ENCODE measurements at regions of chr3 and their contacts with region 1.

Region 1: DNA sequence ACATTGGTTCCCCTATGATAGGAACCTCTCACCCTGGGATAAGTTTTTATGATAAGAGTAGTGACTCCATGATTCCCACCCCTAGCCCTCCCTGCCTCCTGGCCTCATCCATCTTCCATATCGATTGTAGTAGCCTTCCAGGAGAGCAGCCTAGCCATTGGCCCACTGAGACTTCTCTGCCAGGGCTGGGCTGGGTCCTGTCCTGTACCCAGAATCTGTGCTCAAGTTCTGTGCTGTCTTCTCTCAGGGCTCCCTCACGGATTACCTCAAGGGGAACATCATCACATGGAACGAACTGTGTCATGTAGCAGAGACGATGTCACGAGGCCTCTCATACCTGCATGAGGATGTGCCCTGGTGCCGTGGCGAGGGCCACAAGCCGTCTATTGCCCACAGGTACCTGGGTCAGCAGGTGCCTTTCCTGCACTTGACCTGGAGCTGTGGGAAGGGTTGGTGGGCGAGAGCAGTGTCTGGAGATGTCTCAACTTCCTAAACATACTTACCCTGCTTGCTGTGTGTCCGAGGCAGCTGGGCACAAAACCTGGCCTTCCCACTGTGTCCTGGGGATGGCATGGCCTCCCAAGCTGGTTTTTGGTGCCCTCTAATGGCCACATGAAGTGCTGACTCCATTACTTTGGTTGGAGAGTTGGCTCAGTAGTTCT is 16.6 kb upstream of the EXOG start:
- DNase-seq: peak; percentile 37
- H3K4me3 ChIP-seq: no peak overlapping the region
- H3K27ac ChIP-seq: no peak overlapping the region
- H3K27me3 ChIP-seq: no peaks in the 10 kb centered on the region
- CTCF ChIP-seq: peak; percentile 96

Region 2: DNA sequence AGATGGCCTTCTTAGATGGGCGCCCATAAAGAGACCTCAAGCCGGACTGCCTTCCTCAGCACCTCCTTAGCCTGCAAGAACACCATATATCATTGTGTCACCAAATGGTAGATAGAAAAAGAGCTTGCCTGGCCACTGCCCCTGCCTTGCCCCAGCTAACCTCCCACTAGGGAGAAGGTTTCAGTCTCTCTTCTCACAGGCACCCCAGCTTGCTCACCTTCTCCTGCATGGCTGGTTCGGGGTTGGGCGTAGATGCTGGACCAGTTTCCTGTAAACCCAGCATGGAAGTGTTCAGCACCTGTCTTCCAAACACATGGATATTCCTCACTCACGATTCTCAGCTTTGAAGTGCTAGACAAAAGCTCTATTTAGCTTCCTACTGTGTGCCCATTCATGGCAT is 200.7 kb before region 1 on chr3:
- CTCF ChIA-PET with region 1: interaction called, 10 read pairs
- POLR2A ChIA-PET with region 1: no interaction called
- DNase-seq: no peak
- H3K4me3 ChIP-seq: no peak overlapping the region
- H3K27ac ChIP-seq: no peak overlapping the region
- H3K27me3 ChIP-seq: no peaks in the 10 kb centered on the region
- CTCF ChIP-seq: no peak

Region 3: DNA sequence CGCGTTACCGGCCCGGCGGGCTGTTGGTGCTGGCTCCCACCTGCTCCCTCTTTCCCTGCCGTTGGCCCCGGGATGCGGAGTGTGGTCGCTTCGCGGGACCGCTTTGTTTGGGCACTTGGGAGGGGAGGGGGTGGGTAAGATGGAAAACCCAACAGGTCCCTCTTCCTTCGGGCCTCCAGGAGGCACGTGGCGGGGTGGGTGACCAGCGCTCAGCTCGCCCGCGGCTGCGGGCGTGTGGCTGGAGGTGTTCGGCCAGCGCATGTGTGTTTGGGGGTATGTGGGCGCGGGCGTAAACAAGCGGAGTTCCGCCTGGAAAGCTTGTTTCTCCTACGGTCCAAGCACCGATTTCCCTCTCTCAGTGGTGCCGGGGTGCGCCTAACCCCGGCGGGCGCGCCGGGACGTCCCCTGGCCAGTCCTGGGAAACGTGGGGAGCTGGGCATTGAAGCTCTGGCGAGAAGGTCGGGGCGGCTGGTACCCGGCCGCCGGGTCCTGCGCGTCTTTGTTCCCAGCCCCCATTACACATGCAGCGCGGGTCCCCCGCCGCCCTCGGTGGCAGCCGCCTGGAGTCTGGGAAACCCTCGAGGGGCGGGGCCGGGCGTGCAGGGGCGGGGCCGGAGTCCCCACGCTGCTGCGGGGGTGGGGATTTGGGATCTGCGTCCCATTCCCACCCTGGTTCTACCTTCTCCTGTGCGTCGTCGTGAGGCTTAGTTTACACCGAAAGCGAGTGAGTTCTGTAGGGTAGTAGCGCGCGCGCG is 24.5 kb before region 1 on chr3:
- CTCF ChIA-PET with region 1: interaction called, 22 read pairs
- POLR2A ChIA-PET with region 1: no interaction called
- DNase-seq: no peak
- H3K4me3 ChIP-seq: peak overlapping the region; percentile 70
- H3K27ac ChIP-seq: no peak overlapping the region
- H3K27me3 ChIP-seq: no peaks in the 10 kb centered on the region
- CTCF ChIP-seq: no peak

Region 4: DNA sequence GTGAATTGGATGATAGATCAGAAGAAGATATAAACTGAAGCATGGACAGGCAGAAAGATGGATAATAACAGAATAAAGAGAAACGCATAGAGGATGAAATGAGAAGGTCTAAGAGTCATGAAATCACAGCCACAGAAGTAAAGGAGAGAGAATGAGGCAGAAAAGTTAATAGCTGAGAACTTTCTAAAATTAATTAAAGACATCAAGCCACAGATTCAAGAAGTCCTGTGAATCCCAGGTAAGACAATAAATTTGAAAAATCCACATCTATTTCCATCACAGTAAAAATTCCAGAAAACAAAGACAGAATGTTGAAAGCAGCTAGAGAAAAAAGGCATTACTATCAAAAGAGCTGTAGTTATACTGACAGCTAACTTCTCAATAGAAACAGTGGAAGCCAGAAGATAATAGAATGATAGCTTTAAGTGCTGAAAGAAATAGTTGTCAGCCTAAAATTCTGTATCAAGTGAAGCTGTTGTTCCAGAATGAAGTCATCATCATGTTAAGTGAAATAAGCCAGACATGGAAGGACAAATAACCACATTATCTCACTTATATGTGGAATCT is 13.9 kb before region 1 on chr3:
- CTCF ChIA-PET with region 1: interaction called, 12 read pairs
- POLR2A ChIA-PET with region 1: no interaction called
- DNase-seq: no peak
- H3K4me3 ChIP-seq: no peak overlapping the region
- H3K27ac ChIP-seq: no peak overlapping the region
- H3K27me3 ChIP-seq: no peaks in the 10 kb centered on the region
- CTCF ChIP-seq: no peak

Region 5: DNA sequence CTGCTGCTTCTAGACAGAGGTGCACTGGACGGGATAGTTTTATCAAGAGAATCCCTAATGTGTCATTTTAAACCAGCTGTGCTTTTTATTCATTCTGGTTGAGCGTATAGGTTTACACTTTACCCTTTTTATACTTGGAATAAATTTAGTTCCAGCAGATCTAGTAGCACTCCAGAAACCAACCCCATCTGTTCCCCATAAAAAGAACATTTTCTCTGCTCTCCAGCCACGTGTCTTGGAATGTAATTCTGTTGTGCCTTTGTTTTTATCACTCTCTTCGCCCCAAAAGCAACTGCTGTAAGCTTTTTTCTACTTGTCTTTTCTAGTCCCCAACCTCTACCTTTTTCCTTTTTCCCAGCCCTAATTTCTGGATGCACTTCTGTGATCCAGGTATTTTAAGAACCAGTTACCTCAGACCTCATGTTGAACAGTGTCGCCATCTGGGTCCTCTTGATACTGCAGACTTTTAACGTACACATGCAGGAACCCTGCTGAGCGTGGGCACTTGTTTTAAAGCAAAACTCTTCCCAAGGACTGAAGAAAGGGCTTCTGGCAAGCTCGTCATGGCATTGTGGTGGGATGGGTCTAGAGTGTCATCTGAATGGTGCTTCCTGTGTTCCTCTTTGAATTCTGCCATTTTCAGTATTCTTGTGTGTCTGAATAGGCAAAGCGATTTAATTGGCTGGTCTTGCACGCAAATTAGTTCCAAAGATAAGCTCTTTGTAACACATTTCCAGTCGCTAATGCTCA is 10.9 kb after region 1 on chr3:
- CTCF ChIA-PET with region 1: interaction called, 35 read pairs
- POLR2A ChIA-PET with region 1: no interaction called
- DNase-seq: no peak
- H3K4me3 ChIP-seq: no peak overlapping the region
- H3K27ac ChIP-seq: no peak overlapping the region
- H3K27me3 ChIP-seq: no peaks in the 10 kb centered on the region
- CTCF ChIP-seq: no peak

Region 6: DNA sequence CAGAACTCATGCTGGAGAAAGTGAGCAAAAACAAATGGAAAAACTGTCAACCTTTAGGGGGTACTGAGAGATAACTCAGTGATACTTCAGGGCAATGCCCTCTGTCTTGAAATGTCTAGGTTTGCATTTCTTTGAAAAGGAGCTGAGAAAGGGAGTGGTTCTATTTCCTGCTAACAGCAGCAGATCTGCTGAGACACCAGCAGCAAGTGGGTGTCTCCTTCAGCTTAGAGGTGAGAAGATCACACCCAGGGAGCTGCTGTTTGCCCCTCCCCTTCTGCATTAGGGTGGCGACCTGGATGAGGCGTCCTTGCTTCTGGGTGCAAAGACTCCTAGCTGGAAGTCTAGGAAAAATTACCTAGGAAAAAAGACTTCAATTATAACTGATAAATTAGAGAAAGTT is 755.1 kb after region 1 on chr3:
- CTCF ChIA-PET with region 1: no interaction called
- POLR2A ChIA-PET with region 1: no interaction called
- DNase-seq: no peak
- H3K4me3 ChIP-seq: no peak overlapping the region
- H3K27ac ChIP-seq: no peak overlapping the region
- H3K27me3 ChIP-seq: peaks cover 16% of the 10 kb centered on the region
- CTCF ChIP-seq: no peak

Measured in AG04450 (cell line).